Activated T-helper 2 cell treated with anti-CD3 and anti-CD28 coated beads, Interferon-gamma antibody, Interleukin-2, Interleukin-4, amounts not matched to agents 10 μg/mL and 5 μg/mL and 100 μg/mL, durations not matched to agents 14 hours and 24 hours and 36 hours (primary cell): ENCODE measurements at regions of chr2 and their contacts with region 1.

Region 1: DNA sequence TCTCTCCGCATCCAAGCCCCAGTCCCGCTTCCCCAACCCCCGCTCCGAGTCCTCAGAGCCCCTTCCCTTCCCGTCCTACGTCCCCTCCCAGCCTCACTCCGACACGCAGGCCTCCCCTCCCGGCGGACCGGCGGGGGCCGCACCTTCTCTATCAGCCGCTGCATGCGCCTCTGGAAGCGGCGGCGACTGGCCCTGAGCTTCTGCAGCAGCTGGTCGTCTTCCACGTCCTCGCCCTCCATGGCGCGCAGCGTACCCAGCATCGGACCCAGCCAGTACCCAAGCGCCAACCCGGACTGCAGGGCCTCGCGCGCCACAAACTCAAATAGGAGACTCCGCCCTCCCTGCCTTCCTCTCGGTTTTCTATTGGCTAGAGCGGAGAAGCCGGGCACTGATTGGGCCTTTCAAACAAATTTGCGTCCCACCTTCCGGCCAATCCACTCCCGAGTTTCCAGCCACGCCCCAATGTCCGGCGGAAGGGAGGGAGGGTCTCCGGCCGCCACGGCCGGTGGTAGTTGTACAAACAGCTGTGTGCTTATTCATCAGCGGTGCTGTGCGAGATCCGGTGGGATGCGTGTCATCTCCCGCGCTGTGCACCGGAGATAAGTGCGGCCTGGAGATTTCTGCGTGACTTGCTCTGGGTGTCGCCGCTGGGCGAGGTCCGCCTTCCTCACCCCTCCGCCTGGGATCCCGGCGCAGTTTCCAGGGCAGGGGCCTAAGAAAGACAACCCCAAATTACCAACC is at the start of gene HJURP:
- DNase-seq: peak; percentile 94
- H3K4me3 Mint-ChIP-seq: peak within 1 kb of the TSS; percentile 97
- H3K27ac Mint-ChIP-seq: peak within 1 kb of the TSS; percentile 95
- H3K4me1 Mint-ChIP-seq: peaks cover 45% of the 10 kb centered on the region
- H3K27me3 Mint-ChIP-seq: peaks cover 2% of the 10 kb centered on the region
- total RNA-seq, gene HJURP: 50.5 and 52.4 TPM in 2 replicates

Region 2: DNA sequence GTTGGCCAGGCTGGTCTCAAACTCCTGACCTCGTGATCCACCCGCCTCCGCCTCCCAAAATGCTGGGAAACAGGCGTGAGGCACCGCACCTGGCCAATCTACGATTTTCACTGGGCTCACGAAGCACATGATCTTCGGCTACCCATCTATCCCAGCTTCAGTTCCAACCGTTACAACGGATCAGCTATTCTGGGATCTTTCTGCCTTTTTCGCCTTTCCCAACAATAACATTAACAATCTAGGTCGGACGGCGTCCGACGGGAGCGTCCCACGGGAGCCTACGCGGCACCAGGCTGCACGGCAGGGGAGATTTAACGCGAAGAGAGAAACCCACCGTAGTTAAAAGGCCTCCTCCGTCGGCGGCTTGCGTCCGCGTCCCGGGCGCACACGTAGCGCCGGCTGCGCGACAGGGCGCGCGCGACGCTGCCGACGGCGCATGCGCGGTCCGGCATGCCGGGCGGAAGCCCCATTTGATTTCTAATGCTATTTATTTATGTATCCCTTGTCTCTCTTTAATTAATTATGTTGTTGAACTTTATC is 13.7 kb after region 1 on chr2 and contains the start of gene MSL3B:
- intact Hi-C with region 1: loop called (anchors 1 kb)
- DNase-seq: peak; percentile 47
- H3K4me3 Mint-ChIP-seq: peak within 1 kb of the TSS; percentile 88
- H3K27ac Mint-ChIP-seq: peak within 1 kb of the TSS; percentile 82
- H3K4me1 Mint-ChIP-seq: peaks cover 19% of the 10 kb centered on the region
- H3K27me3 Mint-ChIP-seq: peaks cover 24% of the 10 kb centered on the region